Posterior cingulate gyrus (tissue), 11 donors: ENCODE measurements at regions of chr22 and their contacts with region 1.

Region 1: GRCh38 chr22:42649246-42650099 is at the start of gene CYB5R3:
- DNase-seq: peak; percentile 71 to 97 (median 82)

Region 2: GRCh38 chr22:42614312-42615091 is 35.0 kb before region 1 on chr22 and contains the start of gene POLDIP3:
- intact Hi-C with region 1: loop called (anchors 2 kb)
- DNase-seq: peak; percentile 99 to 100 (median 99)